A549 (cell line): ENCODE measurements at regions of chr19 and their contacts with region 1.

Region 1: DNA sequence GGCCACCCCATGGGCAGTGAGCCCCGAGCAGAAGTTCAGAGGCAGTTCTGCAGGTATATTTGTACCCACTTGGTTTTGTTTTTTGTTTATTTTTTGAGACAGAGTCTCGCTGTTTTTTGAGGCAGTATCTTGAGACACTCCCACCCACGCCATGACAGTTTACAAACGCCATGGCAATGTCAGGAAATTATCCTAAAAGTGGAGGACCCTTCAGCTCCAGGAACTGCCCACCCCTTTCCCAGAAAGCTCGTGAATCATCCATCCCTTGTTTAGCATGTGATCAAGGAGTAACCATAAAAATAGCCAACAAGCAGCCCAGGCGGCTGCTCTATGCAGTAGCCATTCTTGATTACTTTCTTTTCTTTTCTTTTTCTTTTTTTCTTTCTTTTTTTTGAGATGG is 41.0 kb downstream of the CELF5 start:
- DNase-seq: no peak
- ATAC-seq: no peak
- H3K4me3 ChIP-seq: no peak overlapping the region
- H3K27ac ChIP-seq: no peak overlapping the region
- H3K4me1 ChIP-seq: no peaks in the 10 kb centered on the region
- CTCF ChIP-seq: no peak
- EP300 ChIP-seq: no peak
- POLR2A ChIP-seq: no peak
- RAD21 ChIP-seq: no peak

Region 2: GRCh38 chr19:3243819-3244700 is 21.4 kb before region 1 on chr19:
- CTCF ChIA-PET with region 1: no interaction called
- POLR2A ChIA-PET with region 1: no interaction called
- DNase-seq: peak in 1 of 2 experiments; percentile 49
- ATAC-seq: peak; percentile 47 to 52; a peak in 4 of 6 replicates
- H3K4me3 ChIP-seq: no peak overlapping the region
- H3K27ac ChIP-seq: no peak overlapping the region
- H3K4me1 ChIP-seq: no peaks in the 10 kb centered on the region
- CTCF ChIP-seq: no peak
- EP300 ChIP-seq: no peak
- POLR2A ChIP-seq: no peak
- RAD21 ChIP-seq: no peak

Region 3: GRCh38 chr19:3275583-3276340 is 10.3 kb after region 1 on chr19:
- CTCF ChIA-PET with region 1: interaction called, 11 read pairs
- POLR2A ChIA-PET with region 1: no interaction called
- DNase-seq: peak; percentile 84 to 94
- ATAC-seq: peak; percentile 70 to 85
- H3K4me3 ChIP-seq: peak overlapping the region; percentile 61
- H3K27ac ChIP-seq: peak overlapping the region; percentile 71 to 92
- H3K4me1 ChIP-seq: peaks cover 8% of the 10 kb centered on the region; the same call in 1 of the 3 replicates
- CTCF ChIP-seq: peak; percentile 80
- EP300 ChIP-seq: no peak
- POLR2A ChIP-seq: no peak; the same call in 1 of the 2 replicates
- RAD21 ChIP-seq: peak; percentile 25 to 39; a peak in 3 of 5 replicates